ENCODE measurements at regions of chr11 and their contacts with region 1.

Region 1: GRCh38 chr11:75204685-75205563 is 35.6 kb upstream of the TPBGL start:
- DNase-seq: peak; percentile 89
- ATAC-seq: peak; percentile 91
- H3K4me3 ChIP-seq: peak overlapping the region in 1 of 3 experiments; percentile 53; a peak in 2 of 6 replicates
- H3K27ac ChIP-seq: peak overlapping the region; percentile 91
- H3K4me1 ChIP-seq: peaks cover 32% of the 10 kb centered on the region
- H3K27me3 ChIP-seq: no peaks in the 10 kb centered on the region
- CTCF ChIP-seq: peak; percentile 99
- EP300 ChIP-seq: no peak
- POLR2A ChIP-seq: peak in 1 of 2 experiments; percentile 14; a peak in 1 of 4 replicates
- RAD21 ChIP-seq: peak; percentile 99

Region 2: DNA sequence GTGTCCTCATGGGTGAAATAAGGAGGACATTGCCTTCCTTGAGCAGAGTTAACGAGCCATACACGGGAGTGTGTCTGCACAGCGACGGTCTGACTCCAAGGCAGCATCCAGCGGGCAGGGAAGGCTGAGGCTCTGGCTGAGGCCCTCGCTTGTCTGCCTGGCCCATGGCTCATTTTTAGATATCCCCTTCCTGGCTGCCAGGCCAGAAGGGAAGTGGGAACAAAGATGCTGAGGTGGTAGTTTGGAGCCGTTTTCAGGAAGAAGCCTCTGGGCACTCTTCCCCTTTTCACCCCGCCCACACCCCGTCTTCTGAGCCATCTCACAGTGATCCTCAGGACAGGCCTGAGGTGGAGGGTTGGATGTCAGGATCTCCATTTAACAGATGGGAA is 57.1 kb before region 1 on chr11:
- CTCF ChIA-PET with region 1: interaction called, 173 read pairs
- POLR2A ChIA-PET with region 1: interaction called, 163 read pairs
- in situ Hi-C with region 1: loop called (anchors 5 kb)
- intact Hi-C with region 1: loop called (anchors 1 kb)
- DNase-seq: no peak
- ATAC-seq: no peak
- H3K4me3 ChIP-seq: no peak overlapping the region
- H3K27ac ChIP-seq: no peak overlapping the region
- H3K4me1 ChIP-seq: peaks cover 99% of the 10 kb centered on the region
- H3K27me3 ChIP-seq: no peaks in the 10 kb centered on the region
- CTCF ChIP-seq: no peak
- EP300 ChIP-seq: no peak
- POLR2A ChIP-seq: no peak
- RAD21 ChIP-seq: no peak

Region 3: GRCh38 chr11:75170521-75171216 is 34.3 kb before region 1 on chr11:
- CTCF ChIA-PET with region 1: interaction called, 6 read pairs
- POLR2A ChIA-PET with region 1: interaction called, 44 read pairs
- in situ Hi-C with region 1: no loop called
- intact Hi-C with region 1: loop called (anchors 2 kb)
- DNase-seq: no peak
- ATAC-seq: no peak
- H3K4me3 ChIP-seq: no peak overlapping the region
- H3K27ac ChIP-seq: peak overlapping the region; percentile 95
- H3K4me1 ChIP-seq: peaks cover 81% of the 10 kb centered on the region
- H3K27me3 ChIP-seq: no peaks in the 10 kb centered on the region
- CTCF ChIP-seq: no peak
- EP300 ChIP-seq: no peak
- POLR2A ChIP-seq: no peak
- RAD21 ChIP-seq: no peak

Region 4: GRCh38 chr11:75241036-75241905 is 36.3 kb after region 1 on chr11:
- CTCF ChIA-PET with region 1: interaction called, 4 read pairs
- POLR2A ChIA-PET with region 1: interaction called, 10 read pairs
- in situ Hi-C with region 1: loop called (anchors 5 kb)
- intact Hi-C with region 1: no loop called
- DNase-seq: peak; percentile 57
- ATAC-seq: peak; percentile 86
- H3K4me3 ChIP-seq: peak overlapping the region; percentile 46 to 74 (median 46); a peak in 5 of 6 replicates
- H3K27ac ChIP-seq: no peak overlapping the region
- H3K4me1 ChIP-seq: peaks cover 15% of the 10 kb centered on the region; the same call in 1 of the 2 replicates
- H3K27me3 ChIP-seq: peaks cover 15 to 63% of the 10 kb centered on the region in 2 experiments
- CTCF ChIP-seq: peak; percentile 76
- EP300 ChIP-seq: no peak
- POLR2A ChIP-seq: no peak
- RAD21 ChIP-seq: peak; percentile 97

Measured in HepG2 (cell line).